Heart right ventricle (tissue), 16 donors: ENCODE measurements at regions of chr1 and their contacts with region 1.

Region 1: GRCh38 chr1:204806943-204807687 is 63.5 kb upstream of the NFASC start:
- DNase-seq: peak; percentile 80 to 85
- ATAC-seq: peak; percentile 93 to 98 (median 96)
- H3K4me3 ChIP-seq: peak overlapping the region in 9 of 10 donors; percentile 16 to 59 (median 51)
- H3K27ac ChIP-seq: no peak overlapping the region
- H3K4me1 ChIP-seq: peaks cover 0 to 13% (median 4%) of the 10 kb centered on the region in 9 donors
- H3K27me3 ChIP-seq: no peaks in the 10 kb centered on the region
- CTCF ChIP-seq: peak; percentile 86 to 99 (median 96)

Region 2: DNA sequence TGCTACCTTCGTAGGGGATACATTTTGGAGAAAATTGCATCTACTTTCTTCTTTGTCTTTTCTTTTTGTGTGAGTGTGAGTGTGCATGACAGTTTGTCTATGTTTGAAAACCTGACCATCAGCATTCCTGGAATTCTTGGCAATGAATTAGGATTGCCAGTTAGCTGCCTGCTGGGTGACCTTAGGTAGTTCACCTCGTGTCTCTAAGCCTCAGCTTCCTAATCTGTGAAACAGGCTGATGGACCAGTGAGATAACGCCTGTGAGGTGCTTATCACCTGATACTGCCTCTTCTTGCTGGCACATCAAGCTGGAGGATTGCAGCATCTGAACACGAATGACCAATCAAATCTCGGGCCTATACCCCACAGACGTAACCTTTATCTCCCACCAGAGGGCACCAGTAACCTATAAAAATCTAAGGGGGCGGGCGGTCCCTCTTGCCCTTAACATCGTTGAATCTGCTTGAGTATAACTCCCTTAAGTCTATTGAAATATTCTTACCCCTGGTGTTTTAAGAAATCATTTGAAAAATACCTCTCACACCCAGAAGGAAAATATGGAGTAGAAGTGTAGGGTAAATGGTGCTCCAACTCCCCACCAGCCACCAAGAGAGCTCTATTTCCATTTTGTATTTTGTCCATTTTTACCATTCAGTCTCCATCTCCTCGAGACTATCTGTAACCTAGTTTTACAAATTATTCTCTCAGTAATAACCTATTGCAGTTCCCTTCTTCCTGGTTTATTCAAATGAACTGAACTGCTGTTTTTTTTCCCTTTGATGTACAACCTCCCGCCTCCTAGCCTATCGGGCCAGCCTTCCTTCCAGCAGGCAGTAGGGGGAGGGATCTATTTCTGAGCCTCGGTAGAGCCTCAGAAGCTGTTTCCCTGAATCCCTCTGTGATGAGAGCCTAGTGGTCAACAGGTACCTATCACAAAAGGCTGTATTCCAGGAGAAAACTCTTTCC is 241.2 kb before region 1 on chr1:
- intact Hi-C with region 1: loop called (anchors 1 to 5 kb)
- DNase-seq: peak in 1 of 2 donors; percentile 41
- ATAC-seq: peak; percentile 57 to 86 (median 80)
- H3K4me3 ChIP-seq: no peak overlapping the region
- H3K27ac ChIP-seq: no peak overlapping the region
- H3K4me1 ChIP-seq: peaks cover 0 to 3% (median 0%) of the 10 kb centered on the region in 9 donors
- H3K27me3 ChIP-seq: no peaks in the 10 kb centered on the region
- CTCF ChIP-seq: peak in 8 of 9 donors; percentile 43 to 77 (median 68)

Region 3: GRCh38 chr1:204763706-204764427 is 43.2 kb before region 1 on chr1:
- intact Hi-C with region 1: no loop called
- DNase-seq: peak; percentile 38 to 75
- ATAC-seq: peak; percentile 78 to 98 (median 94)
- H3K4me3 ChIP-seq: no peak overlapping the region
- H3K27ac ChIP-seq: no peak overlapping the region
- H3K4me1 ChIP-seq: peaks cover 4 to 12% (median 10%) of the 10 kb centered on the region in 9 donors
- H3K27me3 ChIP-seq: peaks cover 0 to 39% (median 30%) of the 10 kb centered on the region in 7 donors
- CTCF ChIP-seq: peak; percentile 60 to 90 (median 84)

Region 4: GRCh38 chr1:204842892-204843291 is 35.8 kb after region 1 on chr1:
- intact Hi-C with region 1: no loop called
- DNase-seq: no peak
- ATAC-seq: peak in 3 of 8 donors; percentile 29 to 50 (median 33)
- H3K4me3 ChIP-seq: no peak overlapping the region
- H3K27ac ChIP-seq: peak overlapping the region in 2 of 10 donors; percentile 16 to 30
- H3K4me1 ChIP-seq: peaks cover 0 to 17% (median 0%) of the 10 kb centered on the region in 9 donors
- H3K27me3 ChIP-seq: no peaks in the 10 kb centered on the region
- CTCF ChIP-seq: no peak

Region 5: GRCh38 chr1:204961765-204962419 is 154.8 kb after region 1 on chr1:
- intact Hi-C with region 1: loop called in 1 of 10 experiments (anchors 5 kb)
- DNase-seq: peak in 1 of 2 donors; percentile 42
- ATAC-seq: peak in 2 of 8 donors; percentile 25 to 39
- H3K4me3 ChIP-seq: no peak overlapping the region
- H3K27ac ChIP-seq: no peak overlapping the region
- H3K4me1 ChIP-seq: peaks cover 0 to 37% (median 20%) of the 10 kb centered on the region in 9 donors
- H3K27me3 ChIP-seq: no peaks in the 10 kb centered on the region
- CTCF ChIP-seq: peak in 1 of 9 donors; percentile 15

Region 6: GRCh38 chr1:205056188-205056611 is 249.1 kb after region 1 on chr1:
- intact Hi-C with region 1: loop called in 4 of 10 experiments (anchors 5 to 10 kb)
- DNase-seq: no peak
- ATAC-seq: no peak
- H3K4me3 ChIP-seq: no peak overlapping the region
- H3K27ac ChIP-seq: no peak overlapping the region
- H3K4me1 ChIP-seq: no peaks in the 10 kb centered on the region
- H3K27me3 ChIP-seq: peaks cover 0 to 23% (median 14%) of the 10 kb centered on the region in 7 donors
- CTCF ChIP-seq: no peak

Region 7: GRCh38 chr1:205061665-205062069 is 254.6 kb after region 1 on chr1:
- intact Hi-C with region 1: loop called in 4 of 10 experiments (anchors 5 to 10 kb)
- DNase-seq: peak; percentile 70 to 74
- ATAC-seq: peak; percentile 55 to 81 (median 70)
- H3K4me3 ChIP-seq: no peak overlapping the region
- H3K27ac ChIP-seq: no peak overlapping the region
- H3K4me1 ChIP-seq: peaks cover 0 to 7% (median 4%) of the 10 kb centered on the region in 9 donors
- H3K27me3 ChIP-seq: no peaks in the 10 kb centered on the region
- CTCF ChIP-seq: peak; percentile 46 to 95 (median 88)

Region 8: DNA sequence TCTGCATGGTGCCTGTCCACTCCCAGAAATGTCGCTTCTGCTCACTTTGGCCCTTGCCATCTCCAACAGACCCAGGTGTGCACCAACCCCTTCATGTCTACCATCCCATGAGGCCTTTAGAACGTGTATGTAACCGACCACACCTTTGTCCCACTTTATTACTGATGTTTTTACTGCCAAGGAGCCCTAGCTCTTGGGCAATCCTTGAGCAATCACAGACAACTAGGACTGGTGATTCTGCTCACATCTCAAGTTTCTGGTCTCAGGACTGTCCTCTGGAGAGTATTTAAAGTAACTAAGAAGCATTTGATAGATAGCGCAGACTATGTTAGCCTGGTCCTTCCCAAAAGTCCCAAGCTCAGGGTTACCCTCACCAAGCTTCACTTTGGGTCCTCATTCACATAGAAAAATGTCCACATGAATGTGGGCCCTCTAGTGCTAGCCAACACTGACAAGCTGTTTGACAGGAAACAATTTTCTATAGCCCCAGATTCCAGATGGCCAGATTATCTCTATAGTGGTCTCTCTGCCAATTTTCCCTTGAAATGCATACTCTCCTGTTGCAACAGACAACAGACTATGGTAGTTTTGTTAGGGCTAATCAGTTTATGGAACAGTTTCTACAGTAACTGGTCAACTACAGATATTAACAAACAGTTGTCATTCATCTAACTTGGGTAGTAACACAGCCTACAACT is 284.1 kb after region 1 on chr1:
- intact Hi-C with region 1: no loop called
- DNase-seq: no peak
- ATAC-seq: no peak
- H3K4me3 ChIP-seq: no peak overlapping the region
- H3K27ac ChIP-seq: no peak overlapping the region
- H3K4me1 ChIP-seq: no peaks in the 10 kb centered on the region
- H3K27me3 ChIP-seq: no peaks in the 10 kb centered on the region
- CTCF ChIP-seq: no peak

Region 9: GRCh38 chr1:205211169-205211838 is 404.2 kb after region 1 on chr1 and contains the start of gene DSTYK:
- intact Hi-C with region 1: no loop called
- DNase-seq: peak; percentile 91 to 95
- ATAC-seq: peak; percentile 97 to 99 (median 98)
- H3K4me3 ChIP-seq: peak within 1 kb of the TSS; percentile 80 to 99 (median 92)
- H3K27ac ChIP-seq: peak within 1 kb of the TSS; percentile 85 to 95 (median 91)
- H3K4me1 ChIP-seq: peaks cover 4 to 37% (median 14%) of the 10 kb centered on the region in 9 donors
- H3K27me3 ChIP-seq: no peaks in the 10 kb centered on the region
- CTCF ChIP-seq: peak in 2 of 9 donors; percentile 20 to 22
- total RNA-seq, gene DSTYK: 5.7 to 9.5 (median 8.0) TPM